Activated naive CD4-positive, alpha-beta T cell treated with anti-CD3 and anti-CD28 coated beads for 36 hours (primary cell): ENCODE measurements at regions of chr11 and their contacts with region 1.

Region 1: DNA sequence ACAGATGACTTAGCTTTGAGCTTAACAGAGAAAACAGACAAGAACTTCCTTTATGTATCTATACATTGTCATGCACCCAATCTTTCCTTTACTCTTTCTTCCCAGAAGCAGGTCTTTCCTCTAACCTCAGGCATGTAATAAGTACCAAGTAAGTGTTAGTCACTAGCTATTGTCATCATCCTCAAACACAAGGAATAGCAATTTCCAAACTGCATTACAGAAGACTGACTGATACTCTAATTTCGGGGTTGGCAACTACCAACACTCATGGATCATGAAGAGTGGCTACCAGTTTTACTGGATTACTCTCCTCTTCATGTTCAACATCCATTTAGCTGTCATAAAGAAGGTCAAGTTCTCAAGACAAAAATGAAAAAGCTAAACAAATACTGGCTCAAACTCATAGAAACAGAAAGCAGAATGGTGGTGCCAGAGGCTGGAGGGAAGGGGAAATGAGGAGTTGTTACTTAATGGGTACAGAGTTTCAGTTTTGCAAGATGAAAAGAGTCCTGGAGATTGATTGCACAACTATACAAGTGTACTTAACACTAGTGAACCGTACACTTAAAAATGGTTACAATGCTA is 111.6 kb downstream of the SIK3 start:
- DNase-seq: peak; percentile 50
- H3K4me3 Mint-ChIP-seq: peak overlapping the region; percentile 48
- H3K27ac Mint-ChIP-seq: peak overlapping the region; percentile 85
- H3K4me1 Mint-ChIP-seq: peaks cover 74% of the 10 kb centered on the region
- H3K27me3 Mint-ChIP-seq: no peaks in the 10 kb centered on the region

Region 2: DNA sequence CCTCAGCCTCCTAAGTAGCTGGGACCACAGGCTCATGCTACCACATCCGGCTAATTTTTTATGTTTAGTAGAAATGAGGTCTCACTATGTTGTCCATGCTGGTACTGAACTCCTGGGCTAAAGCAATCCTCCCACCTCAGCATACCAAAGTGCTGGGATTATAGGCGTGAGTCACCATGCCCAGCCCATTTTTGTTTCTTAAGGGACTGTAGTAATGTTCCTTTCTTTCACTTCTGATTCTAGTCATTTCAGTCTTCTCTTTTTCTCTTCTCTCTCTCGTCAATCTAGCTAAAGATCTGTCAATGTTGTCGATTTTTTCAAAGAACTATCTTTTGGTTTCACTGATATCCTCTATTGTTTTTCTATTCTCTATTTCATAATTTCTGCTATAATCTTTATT is 38.2 kb before region 1 on chr11:
- CTCF ChIA-PET with region 1: interaction called, 4 read pairs
- intact Hi-C with region 1: loop called (anchors 1 kb)
- DNase-seq: peak; percentile 52
- H3K4me3 Mint-ChIP-seq: no peak overlapping the region
- H3K27ac Mint-ChIP-seq: no peak overlapping the region
- H3K4me1 Mint-ChIP-seq: peaks cover 16% of the 10 kb centered on the region
- H3K27me3 Mint-ChIP-seq: no peaks in the 10 kb centered on the region

Region 3: GRCh38 chr11:117010808-117011540 is 24.4 kb after region 1 on chr11:
- CTCF ChIA-PET with region 1: interaction called, 4 read pairs
- intact Hi-C with region 1: loop called (anchors 1 kb)
- DNase-seq: no peak
- H3K4me3 Mint-ChIP-seq: no peak overlapping the region
- H3K27ac Mint-ChIP-seq: peak overlapping the region; percentile 53
- H3K4me1 Mint-ChIP-seq: peaks cover 35% of the 10 kb centered on the region
- H3K27me3 Mint-ChIP-seq: no peaks in the 10 kb centered on the region

Region 4: DNA sequence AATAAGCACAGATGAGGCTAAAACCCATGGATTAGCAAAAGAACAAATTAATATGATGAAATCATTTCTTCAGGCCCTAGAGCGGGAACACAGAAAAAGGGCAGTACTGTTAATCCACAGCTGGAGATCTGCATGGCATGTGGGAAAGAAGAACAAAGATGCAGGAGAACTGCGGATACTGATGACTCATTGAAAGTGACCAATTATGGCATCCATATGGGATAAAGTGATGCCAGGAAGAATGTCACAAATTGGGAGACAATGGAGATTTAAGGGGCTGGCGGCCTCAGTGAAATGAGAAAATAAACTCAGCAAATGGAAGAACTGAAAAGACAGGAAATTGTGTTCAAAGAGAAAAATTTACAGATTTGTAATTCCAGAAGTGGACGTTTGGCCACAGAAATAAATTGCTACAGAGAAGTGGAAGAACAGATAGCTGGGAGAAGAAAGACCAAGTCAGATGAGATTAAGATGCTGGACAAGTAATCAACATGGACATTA is 72.2 kb after region 1 on chr11:
- CTCF ChIA-PET with region 1: no interaction called
- intact Hi-C with region 1: loop called (anchors 1 kb)
- DNase-seq: no peak
- H3K4me3 Mint-ChIP-seq: no peak overlapping the region
- H3K27ac Mint-ChIP-seq: no peak overlapping the region
- H3K4me1 Mint-ChIP-seq: peaks cover 51% of the 10 kb centered on the region
- H3K27me3 Mint-ChIP-seq: no peaks in the 10 kb centered on the region

Region 5: DNA sequence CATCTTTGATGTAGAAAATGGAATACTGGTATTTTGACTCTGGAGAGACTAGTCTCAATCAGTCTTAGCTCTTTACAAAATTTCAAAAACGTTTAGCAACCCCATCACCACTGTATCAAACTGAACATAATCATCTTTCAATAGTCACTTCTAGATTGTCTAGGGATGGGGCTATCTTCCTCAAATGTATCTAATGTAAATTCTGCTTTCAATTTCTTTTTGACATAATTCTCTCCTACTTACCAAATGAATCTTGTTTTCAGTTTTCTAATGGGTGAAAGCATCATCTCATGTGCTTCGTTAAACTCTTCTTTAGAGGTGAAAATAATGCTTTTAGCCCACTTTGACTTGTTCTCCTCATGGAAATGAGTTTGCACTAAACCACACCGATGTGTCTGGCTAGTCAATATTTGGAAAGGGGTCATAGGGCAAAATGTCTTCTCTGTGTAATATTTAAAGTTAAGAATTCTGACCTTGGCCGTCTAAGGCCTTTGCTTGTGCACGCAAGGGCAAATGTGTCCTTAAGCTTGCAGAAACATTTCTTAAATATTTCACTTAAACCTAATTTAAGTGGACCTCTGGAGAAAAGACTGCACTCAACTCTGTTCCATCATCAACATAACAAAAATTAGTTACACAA is 106.5 kb after region 1 on chr11:
- CTCF ChIA-PET with region 1: interaction called, 4 read pairs
- intact Hi-C with region 1: loop called (anchors 1 kb)
- DNase-seq: no peak
- H3K4me3 Mint-ChIP-seq: no peak overlapping the region
- H3K27ac Mint-ChIP-seq: peak overlapping the region; percentile 60
- H3K4me1 Mint-ChIP-seq: peaks cover 76% of the 10 kb centered on the region
- H3K27me3 Mint-ChIP-seq: no peaks in the 10 kb centered on the region